HCT116 (cell line): ENCODE measurements at regions of chr10 and their contacts with region 1.

Region 1: DNA sequence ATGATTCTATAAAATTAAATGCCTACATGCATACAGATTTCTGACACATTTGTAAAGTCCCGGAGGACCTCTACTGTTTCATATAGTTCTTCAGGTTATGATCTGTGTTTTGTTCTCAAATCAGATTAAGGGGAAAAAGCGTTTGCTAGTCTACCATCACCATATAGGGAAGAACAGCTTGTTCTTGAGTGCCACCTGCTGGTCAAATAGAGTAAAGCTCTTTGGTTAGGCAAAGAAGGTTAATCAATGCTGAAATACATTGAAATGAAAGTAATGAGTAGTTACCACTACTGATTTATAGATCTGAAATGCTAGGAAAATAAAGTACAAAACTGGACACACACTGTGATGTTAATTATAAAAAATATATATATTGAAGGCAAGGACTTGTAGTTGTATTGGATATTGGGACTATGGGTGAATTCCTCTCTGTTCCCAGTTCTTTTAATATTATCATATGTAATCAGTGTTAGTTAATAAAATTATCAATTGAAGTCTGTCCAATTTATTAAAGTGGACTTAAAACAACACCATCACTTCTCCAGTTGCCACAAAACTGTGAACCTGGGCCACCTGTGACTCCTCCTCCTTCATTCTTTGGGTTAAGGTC is 72.6 kb upstream of the PDLIM1 start:
- DNase-seq: peak; percentile 61
- ATAC-seq: peak; percentile 84
- H3K4me3 ChIP-seq: no peak overlapping the region
- H3K27ac ChIP-seq: no peak overlapping the region
- H3K4me1 ChIP-seq: no peaks in the 10 kb centered on the region; a peak in 1 of 4 replicates
- H3K27me3 ChIP-seq: no peaks in the 10 kb centered on the region
- CTCF ChIP-seq: peak; percentile 75 to 96 (median 89)
- POLR2A ChIP-seq: no peak
- RAD21 ChIP-seq: peak; percentile 98

Region 2: DNA sequence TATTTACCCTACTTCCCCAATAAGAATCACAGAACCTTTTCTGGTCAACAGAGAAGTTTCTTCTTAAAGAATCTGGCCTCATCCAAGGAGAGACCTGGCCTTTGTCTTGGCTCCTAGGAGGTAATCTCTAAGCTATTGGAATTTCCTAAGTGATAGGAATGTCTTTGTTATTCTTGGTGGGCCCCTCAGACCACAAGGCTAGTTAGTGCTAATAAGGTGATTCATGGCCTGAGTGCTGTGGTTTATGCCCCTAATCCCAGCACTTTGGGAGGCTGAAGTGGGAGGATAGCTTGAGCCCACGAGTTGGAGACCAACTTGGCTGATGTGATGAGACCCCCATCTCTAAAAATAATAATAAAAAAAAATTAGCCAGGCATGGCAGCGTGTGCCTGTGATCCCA is 739.8 kb before region 1 on chr10:
- CTCF ChIA-PET with region 1: no interaction called
- POLR2A ChIA-PET with region 1: no interaction called
- RAD21 ChIA-PET with region 1: no interaction called
- intact Hi-C with region 1: loop called (anchors 10 kb)
- DNase-seq: no peak
- ATAC-seq: no peak
- H3K4me3 ChIP-seq: no peak overlapping the region
- H3K27ac ChIP-seq: no peak overlapping the region
- H3K4me1 ChIP-seq: no peaks in the 10 kb centered on the region
- H3K27me3 ChIP-seq: no peaks in the 10 kb centered on the region
- CTCF ChIP-seq: no peak
- POLR2A ChIP-seq: no peak
- RAD21 ChIP-seq: no peak

Region 3: DNA sequence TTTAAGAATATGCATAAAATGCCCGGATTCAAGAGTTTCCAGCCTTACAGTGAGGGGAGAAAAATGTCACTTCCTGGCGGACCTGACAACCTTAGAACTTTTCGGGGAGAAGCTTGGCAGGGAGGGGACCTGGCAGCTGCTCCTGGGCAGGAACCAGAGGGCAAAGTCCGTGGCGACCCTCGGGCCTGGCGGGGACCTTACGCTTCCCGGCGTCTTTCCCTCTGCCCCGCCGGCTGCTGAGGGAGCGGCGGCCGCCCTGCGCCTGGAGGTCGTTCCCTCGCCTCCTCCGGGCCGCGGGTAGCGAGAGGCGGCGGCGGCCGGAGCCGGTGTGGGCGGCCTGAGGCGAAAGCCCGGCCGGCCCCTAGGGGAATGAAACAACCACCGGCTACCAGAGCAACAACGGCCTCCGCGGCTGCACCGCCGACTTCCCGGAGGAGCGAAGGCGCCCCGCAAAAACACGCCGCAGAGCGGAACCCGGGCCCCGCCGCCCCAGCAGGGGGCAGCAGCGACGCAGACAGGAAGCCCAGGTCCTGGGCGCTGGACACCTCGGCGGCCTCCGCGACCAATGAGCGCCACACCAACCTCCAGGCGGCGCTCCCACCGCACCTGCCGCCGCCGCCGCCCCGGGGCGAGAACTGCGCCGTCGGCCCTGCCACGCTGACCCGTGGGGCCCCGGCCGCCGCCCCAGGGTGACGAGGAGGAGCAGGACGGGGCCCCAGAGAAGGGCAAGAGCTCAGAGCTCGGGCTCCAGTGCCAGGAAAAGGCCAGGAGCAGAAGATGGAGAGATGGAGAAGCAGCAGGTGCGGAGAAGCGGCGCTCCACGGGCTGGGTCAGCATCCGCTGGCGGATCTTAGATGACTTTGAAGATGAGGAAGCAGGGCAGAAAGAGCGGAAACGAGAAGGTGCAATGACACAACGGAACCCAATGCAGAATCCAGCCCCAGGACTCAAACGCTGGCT is 179.9 kb before region 1 on chr10:
- CTCF ChIA-PET with region 1: interaction called, 3 read pairs
- POLR2A ChIA-PET with region 1: no interaction called
- RAD21 ChIA-PET with region 1: no interaction called
- intact Hi-C with region 1: loop called (anchors 5 kb)
- DNase-seq: peak; percentile 73
- ATAC-seq: peak; percentile 98
- H3K4me3 ChIP-seq: peak overlapping the region; percentile 50 to 67
- H3K27ac ChIP-seq: peak overlapping the region; percentile 49
- H3K4me1 ChIP-seq: peaks cover 0 to 9% of the 10 kb centered on the region in 2 experiments; a peak in 2 of 4 replicates
- H3K27me3 ChIP-seq: no peaks in the 10 kb centered on the region
- CTCF ChIP-seq: peak; percentile 78 to 98 (median 84)
- POLR2A ChIP-seq: no peak
- RAD21 ChIP-seq: peak; percentile 76

Region 4: DNA sequence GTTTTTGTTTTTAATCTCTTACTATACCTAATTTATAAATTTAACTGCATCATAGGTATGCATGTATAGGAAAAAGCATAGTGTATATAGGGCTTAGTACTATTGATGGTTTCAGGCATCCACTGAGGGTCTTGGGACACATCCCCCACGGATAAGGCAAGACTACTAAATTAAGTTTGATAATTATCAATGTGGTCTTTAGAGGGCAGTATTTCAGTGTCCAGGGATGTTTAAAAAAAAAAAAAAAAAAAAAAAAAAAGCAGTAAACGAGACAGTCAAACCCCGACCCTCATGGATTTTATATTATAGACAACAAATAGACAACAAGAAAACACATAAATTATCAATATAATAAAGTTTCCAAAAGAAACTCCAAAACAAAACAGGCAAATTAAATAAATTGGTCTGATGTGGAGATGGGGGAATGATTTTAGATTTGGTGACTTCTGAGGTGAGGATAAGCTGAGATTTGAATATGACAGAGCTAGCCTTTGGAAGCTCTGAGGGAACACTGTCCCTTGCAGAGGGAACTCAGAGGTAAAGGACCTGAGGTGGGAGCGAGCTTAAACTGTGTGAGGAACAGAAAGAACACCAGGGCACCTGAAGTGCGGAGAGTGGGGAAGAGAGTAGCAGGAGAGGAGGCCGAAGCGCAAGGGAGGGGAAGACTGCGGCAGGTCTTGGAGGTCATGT is 154.6 kb before region 1 on chr10:
- CTCF ChIA-PET with region 1: interaction called, 10 read pairs
- POLR2A ChIA-PET with region 1: no interaction called
- RAD21 ChIA-PET with region 1: no interaction called
- intact Hi-C with region 1: no loop called
- DNase-seq: peak; percentile 8
- ATAC-seq: peak; percentile 63; the same call in 1 of the 2 replicates
- H3K4me3 ChIP-seq: no peak overlapping the region
- H3K27ac ChIP-seq: no peak overlapping the region
- H3K4me1 ChIP-seq: peaks cover 6 to 24% of the 10 kb centered on the region in 2 experiments
- H3K27me3 ChIP-seq: no peaks in the 10 kb centered on the region
- CTCF ChIP-seq: peak; percentile 17 to 57 (median 49); a peak in 4 of 6 replicates
- POLR2A ChIP-seq: no peak
- RAD21 ChIP-seq: peak; percentile 55

Region 5: DNA sequence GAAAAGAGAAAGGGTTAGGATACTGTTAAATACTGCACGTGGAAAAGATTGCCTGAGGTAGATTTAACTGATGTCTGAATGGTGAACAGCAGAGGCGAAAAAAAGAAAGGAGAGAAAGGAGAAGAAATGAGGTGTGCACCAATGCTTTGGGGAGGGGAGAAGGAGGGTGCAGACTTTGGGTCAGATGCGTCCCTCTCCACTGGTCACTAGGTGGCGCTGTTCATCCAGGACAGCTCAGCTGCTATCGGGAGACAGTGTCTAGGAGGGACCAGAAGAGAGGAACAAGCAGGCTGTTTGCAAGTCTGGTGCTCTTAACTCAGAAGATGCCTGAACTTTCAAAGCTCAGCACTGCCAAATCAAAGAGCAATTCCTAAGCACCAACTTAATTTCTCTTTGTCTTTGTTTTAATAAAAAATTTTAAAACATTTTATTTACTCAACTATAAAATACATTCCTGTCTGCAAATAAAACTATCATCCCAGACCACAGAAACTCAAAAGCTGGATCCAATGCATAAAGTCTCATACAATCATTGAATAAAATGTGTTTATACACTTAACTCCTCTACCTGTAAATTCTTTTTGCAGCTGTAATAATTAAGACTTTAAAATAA is 11.3 kb after region 1 on chr10:
- CTCF ChIA-PET with region 1: interaction called, 20 read pairs
- POLR2A ChIA-PET with region 1: no interaction called
- RAD21 ChIA-PET with region 1: no interaction called
- intact Hi-C with region 1: no loop called
- DNase-seq: peak; percentile 61
- ATAC-seq: peak; percentile 100
- H3K4me3 ChIP-seq: no peak overlapping the region
- H3K27ac ChIP-seq: no peak overlapping the region
- H3K4me1 ChIP-seq: no peaks in the 10 kb centered on the region
- H3K27me3 ChIP-seq: 0 out of 2 replicates have a peak, but pooled peaks cover 8% of the 10 kb centered on the region
- CTCF ChIP-seq: peak; percentile 91 to 94 (median 93)
- POLR2A ChIP-seq: no peak
- RAD21 ChIP-seq: peak; percentile 96